ENCODE measurements at regions of chr11 and their contacts with region 1.

Region 1: DNA sequence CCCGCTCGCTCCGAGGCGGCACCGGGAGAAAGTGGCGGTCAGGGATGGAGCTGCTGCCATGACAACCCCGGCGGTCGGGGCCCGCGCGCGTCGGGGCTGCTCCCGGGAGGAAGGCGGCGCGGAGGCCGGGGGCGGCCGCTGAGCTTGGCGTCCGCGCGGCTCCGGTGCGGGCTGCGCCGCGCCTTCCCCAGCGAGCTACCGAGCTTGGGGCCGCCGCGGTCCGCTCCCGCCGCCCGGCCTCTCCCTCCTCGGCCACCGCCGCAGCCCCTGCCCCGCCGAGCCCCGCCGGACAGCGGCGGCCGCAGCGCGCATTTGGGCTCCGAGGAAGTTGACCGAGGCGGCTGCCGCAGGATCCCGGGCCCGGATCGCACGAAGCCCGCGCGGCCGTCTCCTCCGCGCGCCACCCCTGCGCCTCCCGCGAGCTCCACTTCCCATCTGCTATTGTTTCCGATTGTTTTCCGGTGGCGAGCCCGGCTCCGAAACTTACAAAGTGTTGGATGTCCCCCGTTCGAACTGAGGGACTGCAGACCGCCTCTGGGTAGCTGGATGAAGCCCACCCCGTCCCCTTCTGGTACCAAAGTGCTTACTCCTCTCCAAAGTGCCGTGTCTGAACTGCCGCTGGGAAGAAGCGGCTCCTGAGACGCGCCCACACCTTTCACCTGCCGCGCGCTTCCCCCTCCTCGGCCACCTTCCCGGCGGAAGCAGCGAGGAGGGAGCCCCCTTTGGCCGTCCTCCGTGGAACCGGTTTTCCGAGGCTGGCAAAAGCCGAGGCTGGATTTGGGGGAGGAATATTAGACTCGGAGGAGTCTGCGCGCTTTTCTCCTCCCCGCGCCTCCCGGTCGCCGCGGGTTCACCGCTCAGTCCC is 540.3 kb downstream of the NTM start:
- DNase-seq: peak in 1 of 2 experiments; percentile 74
- H3K4me3 ChIP-seq: peak overlapping the region; percentile 69 to 85 (median 76)
- H3K27ac ChIP-seq: no peak overlapping the region
- H3K4me1 ChIP-seq: peaks cover 4 to 15% (median 7%) of the 10 kb centered on the region in 4 experiments; a peak in 6 of 7 replicates
- H3K27me3 ChIP-seq: no peaks in the 10 kb centered on the region; a peak in 1 of 7 replicates
- CTCF ChIP-seq: no peak
- EP300 ChIP-seq: no peak
- POLR2A ChIP-seq: no peak
- RAD21 ChIP-seq: 0 out of 4 replicates have a peak, but pooled peaks of 1 of the 2 experiments have one; percentile 3

Region 2: GRCh38 chr11:131867457-131868257 is 43.1 kb before region 1 on chr11:
- CTCF ChIA-PET with region 1: interaction called, 137 read pairs
- POLR2A ChIA-PET with region 1: interaction called, 4 read pairs
- DNase-seq: peak; percentile 68 to 86
- H3K4me3 ChIP-seq: no peak overlapping the region
- H3K27ac ChIP-seq: no peak overlapping the region
- H3K4me1 ChIP-seq: peaks cover 18 to 33% (median 20%) of the 10 kb centered on the region in 4 experiments
- H3K27me3 ChIP-seq: no peaks in the 10 kb centered on the region
- CTCF ChIP-seq: peak; percentile 91 to 98 (median 96)
- EP300 ChIP-seq: no peak
- POLR2A ChIP-seq: no peak
- RAD21 ChIP-seq: peak; percentile 96

Region 3: GRCh38 chr11:131894615-131895544 is 15.9 kb before region 1 on chr11:
- CTCF ChIA-PET with region 1: interaction called, 27 read pairs
- POLR2A ChIA-PET with region 1: no interaction called
- DNase-seq: no peak
- H3K4me3 ChIP-seq: no peak overlapping the region
- H3K27ac ChIP-seq: no peak overlapping the region
- H3K4me1 ChIP-seq: peaks cover 12 to 21% (median 18%) of the 10 kb centered on the region in 4 experiments
- H3K27me3 ChIP-seq: no peaks in the 10 kb centered on the region
- CTCF ChIP-seq: no peak
- EP300 ChIP-seq: no peak
- POLR2A ChIP-seq: no peak
- RAD21 ChIP-seq: no peak

Region 4: GRCh38 chr11:131899950-131900580 is 10.7 kb before region 1 on chr11:
- CTCF ChIA-PET with region 1: interaction called, 27 read pairs
- POLR2A ChIA-PET with region 1: no interaction called
- DNase-seq: no peak
- H3K4me3 ChIP-seq: no peak overlapping the region
- H3K27ac ChIP-seq: no peak overlapping the region
- H3K4me1 ChIP-seq: peaks cover 0 to 8% (median 0%) of the 10 kb centered on the region in 4 experiments; a peak in 2 of 7 replicates
- H3K27me3 ChIP-seq: no peaks in the 10 kb centered on the region
- CTCF ChIP-seq: no peak
- EP300 ChIP-seq: no peak
- POLR2A ChIP-seq: no peak
- RAD21 ChIP-seq: no peak

Region 5: GRCh38 chr11:131924457-131925201 is 13.9 kb after region 1 on chr11:
- CTCF ChIA-PET with region 1: interaction called, 14 read pairs
- POLR2A ChIA-PET with region 1: no interaction called
- DNase-seq: no peak
- H3K4me3 ChIP-seq: no peak overlapping the region
- H3K27ac ChIP-seq: no peak overlapping the region
- H3K4me1 ChIP-seq: peaks cover 0 to 9% (median 5%) of the 10 kb centered on the region in 4 experiments; a peak in 3 of 7 replicates
- H3K27me3 ChIP-seq: peaks cover 0 to 2% (median 0%) of the 10 kb centered on the region in 4 experiments; a peak in 1 of 7 replicates
- CTCF ChIP-seq: no peak
- EP300 ChIP-seq: no peak
- POLR2A ChIP-seq: no peak
- RAD21 ChIP-seq: no peak